Transverse colon (tissue), 4 donors: ENCODE measurements at regions of chr20 and their contacts with region 1.

Region 1: DNA sequence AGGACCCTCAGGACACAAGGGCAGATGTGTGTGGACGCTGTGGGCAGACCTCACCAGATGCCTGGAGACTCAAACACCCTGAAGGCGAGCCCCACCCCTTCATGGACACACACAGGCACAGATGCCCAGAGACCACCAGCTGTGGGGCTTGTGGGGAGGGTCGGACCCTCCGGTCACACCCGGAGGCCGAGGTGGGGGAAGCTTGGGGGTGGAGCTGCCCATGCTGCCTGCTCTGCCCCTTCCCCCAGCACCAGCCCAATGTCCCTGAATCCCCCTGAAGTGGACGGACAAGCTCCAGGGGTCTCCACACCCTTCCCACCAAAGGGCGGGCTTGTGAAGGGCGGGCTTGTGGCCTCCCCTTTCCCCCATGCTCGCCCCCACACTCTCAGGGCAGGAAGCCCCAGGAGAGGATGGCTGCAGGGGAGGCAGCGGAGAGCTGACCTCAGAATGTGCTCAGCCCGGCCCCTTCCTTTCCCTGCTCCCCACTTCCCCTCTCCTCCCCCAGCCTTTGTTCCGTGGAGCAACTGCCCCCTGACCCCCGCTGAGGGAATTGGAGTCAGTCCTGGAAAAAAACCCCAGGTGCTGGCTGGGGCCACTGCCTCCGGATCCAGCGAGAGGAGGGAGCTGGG is 13.8 kb upstream of the ABHD16B start:
- DNase-seq: no peak
- H3K4me3 ChIP-seq: no peak overlapping the region
- H3K27ac ChIP-seq: peak overlapping the region in 3 of 4 donors; percentile 10 to 32 (median 25)
- H3K4me1 ChIP-seq: peaks cover 5 to 17% (median 7%) of the 10 kb centered on the region in 4 donors
- H3K27me3 ChIP-seq: peaks cover 54% of the 10 kb centered on the region
- CTCF ChIP-seq: no peak
- EP300 ChIP-seq: no peak
- POLR2A ChIP-seq: no peak

Region 2: GRCh38 chr20:63808964-63809674 is 38.4 kb before region 1 on chr20:
- in situ Hi-C with region 1: no loop called
- intact Hi-C with region 1: loop called (anchors 1 kb)
- DNase-seq: no peak
- H3K4me3 ChIP-seq: no peak overlapping the region
- H3K27ac ChIP-seq: no peak overlapping the region
- H3K4me1 ChIP-seq: no peaks in the 10 kb centered on the region
- H3K27me3 ChIP-seq: no peaks in the 10 kb centered on the region
- CTCF ChIP-seq: no peak
- EP300 ChIP-seq: no peak
- POLR2A ChIP-seq: no peak